T-cell (primary cell): ENCODE measurements at regions of chr1 and their contacts with region 1.

Region 1: DNA sequence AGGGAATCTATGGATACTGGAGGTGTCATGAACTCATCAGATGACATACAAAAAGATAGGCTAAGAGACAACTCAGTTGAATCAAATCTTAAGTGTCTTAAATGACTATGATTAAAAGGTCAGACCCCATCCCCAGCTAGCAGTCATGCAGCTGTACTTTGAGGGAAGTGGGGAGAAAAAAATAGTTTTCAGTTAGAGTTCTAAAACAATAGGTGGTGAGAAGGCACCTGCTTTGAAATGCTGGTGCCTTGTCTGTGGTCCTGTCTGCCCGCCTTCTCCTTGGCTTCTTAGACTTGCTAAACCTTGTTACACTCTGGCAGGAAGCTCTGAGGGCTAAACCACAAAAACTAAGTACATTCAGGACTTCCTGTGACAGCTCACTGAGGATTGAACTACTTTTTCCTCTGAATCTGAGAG is 15.3 kb downstream of the CD2 start:
- DNase-seq: peak in 33 of 35 experiments; percentile 60 to 91 (median 75)
- ATAC-seq: peak; percentile 86 to 90 (median 88)
- H3K4me3 ChIP-seq: peak overlapping the region; percentile 19 to 41
- H3K4me3 Mint-ChIP-seq: peak overlapping the region; percentile 58 to 100 (median 69)
- H3K27ac ChIP-seq: peak overlapping the region; percentile 87
- H3K27ac Mint-ChIP-seq: peak overlapping the region; percentile 99 to 100
- H3K4me1 ChIP-seq: peaks cover 73 to 75% of the 10 kb centered on the region in 2 experiments
- H3K4me1 Mint-ChIP-seq: peaks cover 87 to 90% (median 89%) of the 10 kb centered on the region in 3 donors
- H3K27me3 ChIP-seq: no peaks in the 10 kb centered on the region
- H3K27me3 Mint-ChIP-seq: no peaks in the 10 kb centered on the region

Region 2: GRCh38 chr1:116754198-116754977 is 15.2 kb before region 1 on chr1 and contains the start of gene CD2:
- CTCF ChIA-PET with region 1: interaction called, 4 to 24 read pairs
- POLR2A ChIA-PET with region 1: interaction called, 17 to 30 read pairs
- DNase-seq: peak in 33 of 35 experiments; percentile 34 to 75 (median 58)
- ATAC-seq: peak; percentile 82 to 89 (median 84)
- H3K4me3 ChIP-seq: peak within 1 kb of the TSS; percentile 81 to 91
- H3K4me3 Mint-ChIP-seq: peak within 1 kb of the TSS; percentile 96 to 100 (median 99)
- H3K27ac ChIP-seq: peak within 1 kb of the TSS; percentile 80
- H3K27ac Mint-ChIP-seq: peak within 1 kb of the TSS; percentile 96 to 98
- H3K4me1 ChIP-seq: peaks cover 16 to 20% of the 10 kb centered on the region in 2 experiments
- H3K4me1 Mint-ChIP-seq: peaks cover 35 to 68% (median 40%) of the 10 kb centered on the region in 3 donors
- H3K27me3 ChIP-seq: no peaks in the 10 kb centered on the region
- H3K27me3 Mint-ChIP-seq: no peaks in the 10 kb centered on the region
- total RNA-seq, gene CD2: 119 to 209 (median 158) TPM

Region 3: GRCh38 chr1:116794804-116795481 is 25.4 kb after region 1 on chr1:
- CTCF ChIA-PET with region 1: interaction called in 1 of 2 experiments, 13 read pairs
- POLR2A ChIA-PET with region 1: no interaction called
- DNase-seq: no peak
- ATAC-seq: no peak
- H3K4me3 ChIP-seq: no peak overlapping the region
- H3K4me3 Mint-ChIP-seq: no peak overlapping the region
- H3K27ac ChIP-seq: no peak overlapping the region
- H3K27ac Mint-ChIP-seq: peak overlapping the region; percentile 23 to 31
- H3K4me1 ChIP-seq: peaks cover 12 to 36% of the 10 kb centered on the region in 2 experiments
- H3K4me1 Mint-ChIP-seq: peaks cover 48 to 70% (median 66%) of the 10 kb centered on the region in 3 donors
- H3K27me3 ChIP-seq: no peaks in the 10 kb centered on the region
- H3K27me3 Mint-ChIP-seq: no peaks in the 10 kb centered on the region

Region 4: DNA sequence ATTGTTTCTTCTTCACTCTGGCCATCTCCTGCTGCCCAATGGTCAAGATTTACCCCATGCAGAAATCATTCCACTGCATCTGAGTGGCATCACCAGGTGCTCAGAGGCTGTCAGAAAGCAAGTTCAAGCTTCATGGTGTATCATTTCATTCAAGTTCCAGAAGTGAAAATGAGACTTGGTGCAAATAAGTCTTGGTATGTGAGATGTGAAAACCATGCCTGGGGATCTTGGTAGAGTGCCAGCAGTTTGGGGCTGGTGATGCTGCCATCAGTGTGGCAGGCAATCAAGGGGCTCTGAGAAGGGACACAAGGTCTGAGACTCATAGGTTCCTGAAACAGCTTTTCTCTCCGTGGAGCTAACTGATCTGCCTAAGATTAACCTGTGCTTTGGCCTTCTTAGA is 36.7 kb after region 1 on chr1:
- CTCF ChIA-PET with region 1: interaction called in 1 of 2 experiments, 11 read pairs
- POLR2A ChIA-PET with region 1: interaction called, 9 to 12 read pairs
- DNase-seq: peak in 33 of 35 experiments; percentile 19 to 78 (median 43)
- ATAC-seq: peak; percentile 15 to 49 (median 29)
- H3K4me3 ChIP-seq: peak overlapping the region in 1 of 2 donors; percentile 22
- H3K4me3 Mint-ChIP-seq: peak overlapping the region; percentile 61 to 72 (median 64)
- H3K27ac ChIP-seq: peak overlapping the region; percentile 87
- H3K27ac Mint-ChIP-seq: peak overlapping the region; percentile 95 to 99
- H3K4me1 ChIP-seq: peaks cover 8 to 71% of the 10 kb centered on the region in 2 experiments
- H3K4me1 Mint-ChIP-seq: peaks cover 72 to 92% (median 91%) of the 10 kb centered on the region in 3 donors
- H3K27me3 ChIP-seq: no peaks in the 10 kb centered on the region
- H3K27me3 Mint-ChIP-seq: no peaks in the 10 kb centered on the region

Region 5: GRCh38 chr1:116817582-116818064 is 48.1 kb after region 1 on chr1:
- CTCF ChIA-PET with region 1: interaction called, 8 to 15 read pairs
- POLR2A ChIA-PET with region 1: interaction called, 3 to 7 read pairs
- DNase-seq: peak; percentile 39 to 86 (median 60)
- ATAC-seq: peak; percentile 71 to 77 (median 74)
- H3K4me3 ChIP-seq: no peak overlapping the region
- H3K4me3 Mint-ChIP-seq: peak overlapping the region in 2 of 3 donors; percentile 34 to 70
- H3K27ac ChIP-seq: peak overlapping the region; percentile 61
- H3K27ac Mint-ChIP-seq: peak overlapping the region; percentile 64 to 80
- H3K4me1 ChIP-seq: peaks cover 23 to 27% of the 10 kb centered on the region in 2 experiments
- H3K4me1 Mint-ChIP-seq: peaks cover 28 to 33% (median 32%) of the 10 kb centered on the region in 3 donors
- H3K27me3 ChIP-seq: no peaks in the 10 kb centered on the region
- H3K27me3 Mint-ChIP-seq: no peaks in the 10 kb centered on the region

Region 6: GRCh38 chr1:116881879-116882520 is 112.4 kb after region 1 on chr1:
- CTCF ChIA-PET with region 1: interaction called in 1 of 2 experiments, 6 read pairs
- POLR2A ChIA-PET with region 1: interaction called in 1 of 2 experiments, 13 read pairs
- DNase-seq: peak in 6 of 35 experiments; percentile 2 to 41 (median 6)
- ATAC-seq: peak in 1 of 4 experiments; percentile 18
- H3K4me3 ChIP-seq: no peak overlapping the region
- H3K4me3 Mint-ChIP-seq: no peak overlapping the region
- H3K27ac ChIP-seq: no peak overlapping the region
- H3K27ac Mint-ChIP-seq: peak overlapping the region in 1 of 2 donors; percentile 13
- H3K4me1 ChIP-seq: peaks cover 20 to 21% of the 10 kb centered on the region in 2 experiments
- H3K4me1 Mint-ChIP-seq: peaks cover 0 to 4% (median 0%) of the 10 kb centered on the region in 3 donors
- H3K27me3 ChIP-seq: peaks cover 0 to 8% of the 10 kb centered on the region in 2 experiments
- H3K27me3 Mint-ChIP-seq: no peaks in the 10 kb centered on the region

Region 7: GRCh38 chr1:117059678-117060440 is 290.3 kb after region 1 on chr1 and contains the start of gene TTF2:
- CTCF ChIA-PET with region 1: interaction called in 1 of 2 experiments, 6 read pairs
- POLR2A ChIA-PET with region 1: interaction called in 1 of 2 experiments, 11 read pairs
- DNase-seq: peak; percentile 87 to 99 (median 96)
- ATAC-seq: peak; percentile 91 to 96 (median 94)
- H3K4me3 ChIP-seq: peak within 1 kb of the TSS; percentile 70 to 83
- H3K4me3 Mint-ChIP-seq: no peak within 1 kb of the TSS
- H3K27ac ChIP-seq: peak within 1 kb of the TSS; percentile 85
- H3K27ac Mint-ChIP-seq: peak within 1 kb of the TSS; percentile 39 to 77
- H3K4me1 ChIP-seq: peaks cover 12 to 15% of the 10 kb centered on the region in 2 experiments
- H3K4me1 Mint-ChIP-seq: peaks cover 44 to 48% (median 46%) of the 10 kb centered on the region in 3 donors
- H3K27me3 ChIP-seq: no peaks in the 10 kb centered on the region
- H3K27me3 Mint-ChIP-seq: no peaks in the 10 kb centered on the region
- total RNA-seq, gene TTF2: 26.7 to 37.1 (median 33.8) TPM